Breast epithelium (tissue), 4 donors: ENCODE measurements at regions of chr6 and their contacts with region 1.

Region 1: GRCh38 chr6:150004783-150005717 is 20.3 kb downstream of the RAET1L start:
- DNase-seq: peak; percentile 83 to 84
- H3K4me3 ChIP-seq: peak overlapping the region; percentile 41 to 78 (median 61)
- H3K27ac ChIP-seq: no peak overlapping the region
- H3K4me1 ChIP-seq: no peaks in the 10 kb centered on the region
- H3K27me3 ChIP-seq: peaks cover 0 to 18% of the 10 kb centered on the region in 2 donors
- CTCF ChIP-seq: no peak
- POLR2A ChIP-seq: no peak

Region 2: DNA sequence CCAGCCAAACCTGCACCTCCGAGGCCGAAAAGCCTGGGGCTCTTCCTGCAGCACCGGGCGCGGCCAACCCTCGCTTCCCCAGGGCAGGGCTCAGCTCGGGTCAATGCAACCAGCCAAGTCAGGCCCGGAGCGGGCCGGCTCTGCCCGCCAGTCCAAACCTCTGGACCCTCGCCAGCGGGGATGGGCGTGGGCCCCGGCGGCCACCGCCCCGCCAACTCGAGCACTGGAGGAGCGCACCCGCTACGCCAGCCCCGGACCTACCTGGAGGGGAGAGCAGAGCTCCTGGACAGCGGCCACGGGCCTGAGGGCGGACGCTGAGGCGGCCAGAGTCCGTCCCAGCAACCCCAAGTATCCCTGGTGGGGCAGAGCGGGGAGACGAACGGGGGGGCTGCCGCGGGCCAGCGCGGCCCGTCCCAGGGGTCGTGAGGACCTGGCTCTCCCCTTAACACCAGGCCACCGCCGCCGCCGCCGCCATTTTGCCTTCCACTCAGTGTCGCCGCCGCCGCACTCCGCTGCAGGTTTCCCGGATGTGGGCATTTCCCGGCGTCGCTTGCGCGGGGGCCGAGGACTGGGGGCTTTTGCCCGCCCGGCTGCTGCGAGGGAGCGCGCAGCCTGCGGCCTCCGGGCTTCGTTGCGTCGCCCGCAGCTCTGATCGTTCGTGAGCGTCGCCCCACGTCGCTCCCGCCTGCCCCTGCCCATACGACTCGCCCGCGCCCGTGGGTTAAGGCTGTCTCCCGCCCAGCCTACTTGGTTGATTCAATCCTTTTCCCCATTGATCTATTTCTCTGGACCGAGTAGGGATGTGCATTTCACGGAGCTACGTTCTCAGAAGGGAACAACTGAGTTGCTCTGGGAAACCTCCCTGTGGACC is 287.2 kb before region 1 on chr6 and contains the start of gene LATS1:
- intact Hi-C with region 1: loop called (anchors 2 kb)
- DNase-seq: peak; percentile 84 to 92
- H3K4me3 ChIP-seq: peak within 1 kb of the TSS; percentile 87 to 95 (median 94)
- H3K27ac ChIP-seq: peak within 1 kb of the TSS; percentile 99 to 100
- H3K4me1 ChIP-seq: no peaks in the 10 kb centered on the region
- H3K27me3 ChIP-seq: no peaks in the 10 kb centered on the region
- CTCF ChIP-seq: no peak
- POLR2A ChIP-seq: peak; percentile 69
- total RNA-seq, gene LATS1: 24.3 to 36.4 (median 30.2) TPM

Region 3: DNA sequence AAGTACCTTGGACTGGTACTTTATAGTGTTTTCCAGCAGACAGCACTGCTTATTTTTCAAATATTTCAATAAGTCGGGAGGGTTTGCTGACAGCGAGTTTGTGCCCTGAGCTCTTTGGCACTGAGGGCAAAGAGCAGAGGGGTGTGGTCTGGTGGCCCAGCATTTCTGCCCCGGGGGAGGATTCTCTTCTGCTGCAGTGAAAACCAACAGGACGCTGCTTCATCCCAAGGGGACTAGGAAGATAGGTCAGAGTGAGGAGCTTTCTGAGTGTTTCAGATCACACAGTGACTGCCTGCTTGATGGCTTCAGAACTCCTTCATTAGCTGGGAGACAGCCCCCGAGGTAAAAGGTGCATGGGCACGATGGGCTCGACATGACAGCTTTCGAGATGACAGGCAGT is 54.6 kb before region 1 on chr6:
- intact Hi-C with region 1: loop called (anchors 10 kb)
- DNase-seq: no peak
- H3K4me3 ChIP-seq: no peak overlapping the region
- H3K27ac ChIP-seq: no peak overlapping the region
- H3K4me1 ChIP-seq: no peaks in the 10 kb centered on the region
- H3K27me3 ChIP-seq: peaks cover 0 to 36% of the 10 kb centered on the region in 2 donors
- CTCF ChIP-seq: no peak
- POLR2A ChIP-seq: no peak

Region 4: GRCh38 chr6:150046943-150047342 is 41.9 kb after region 1 on chr6:
- intact Hi-C with region 1: no loop called
- DNase-seq: no peak
- H3K4me3 ChIP-seq: no peak overlapping the region
- H3K27ac ChIP-seq: no peak overlapping the region
- H3K4me1 ChIP-seq: no peaks in the 10 kb centered on the region
- H3K27me3 ChIP-seq: peaks cover 0 to 4% of the 10 kb centered on the region in 2 donors
- CTCF ChIP-seq: no peak
- POLR2A ChIP-seq: no peak